ENCODE measurements at regions of chrX and their contacts with region 1.

Region 1: GRCh38 chrX:119757979-119758730 is at the start of gene SOWAHD:
- DNase-seq: peak; percentile 63
- ATAC-seq: peak; percentile 65
- H3K4me3 Mint-ChIP-seq: peak within 1 kb of the TSS; percentile 80
- H3K27ac Mint-ChIP-seq: peak within 1 kb of the TSS; percentile 95
- H3K4me1 Mint-ChIP-seq: peaks cover 36% of the 10 kb centered on the region
- H3K27me3 Mint-ChIP-seq: peaks cover 13% of the 10 kb centered on the region
- CTCF ChIP-seq: no peak
- total RNA-seq, gene SOWAHD: 3.6 to 5.0 TPM (median 4.3 TPM) in 3 replicates

Region 2: GRCh38 chrX:119512146-119512800 is 245.9 kb before region 1 on chrX:
- CTCF ChIA-PET with region 1: interaction called, 18 read pairs
- POLR2A ChIA-PET with region 1: no interaction called
- DNase-seq: peak; percentile 61
- ATAC-seq: peak; percentile 98
- H3K4me3 Mint-ChIP-seq: no peak overlapping the region
- H3K27ac Mint-ChIP-seq: no peak overlapping the region
- H3K4me1 Mint-ChIP-seq: no peaks in the 10 kb centered on the region
- H3K27me3 Mint-ChIP-seq: no peaks in the 10 kb centered on the region
- CTCF ChIP-seq: no peak

Region 3: GRCh38 chrX:119606280-119607015 is 151.7 kb before region 1 on chrX and contains the start of gene NKRF:
- CTCF ChIA-PET with region 1: interaction called, 11 read pairs
- POLR2A ChIA-PET with region 1: interaction called, 5 read pairs
- DNase-seq: peak; percentile 85
- ATAC-seq: peak; percentile 77
- H3K4me3 Mint-ChIP-seq: peak within 1 kb of the TSS; percentile 81
- H3K27ac Mint-ChIP-seq: peak within 1 kb of the TSS; percentile 86
- H3K4me1 Mint-ChIP-seq: peaks cover 20% of the 10 kb centered on the region
- H3K27me3 Mint-ChIP-seq: peaks cover 35% of the 10 kb centered on the region
- CTCF ChIP-seq: no peak
- total RNA-seq, gene NKRF: 13.0 to 15.0 TPM (median 13.6 TPM) in 3 replicates

Region 4: GRCh38 chrX:119647552-119648420 is 110.4 kb before region 1 on chrX:
- CTCF ChIA-PET with region 1: no interaction called
- POLR2A ChIA-PET with region 1: no interaction called
- DNase-seq: no peak
- ATAC-seq: no peak
- H3K4me3 Mint-ChIP-seq: no peak overlapping the region
- H3K27ac Mint-ChIP-seq: no peak overlapping the region
- H3K4me1 Mint-ChIP-seq: no peaks in the 10 kb centered on the region
- H3K27me3 Mint-ChIP-seq: no peaks in the 10 kb centered on the region
- CTCF ChIP-seq: no peak

Region 5: DNA sequence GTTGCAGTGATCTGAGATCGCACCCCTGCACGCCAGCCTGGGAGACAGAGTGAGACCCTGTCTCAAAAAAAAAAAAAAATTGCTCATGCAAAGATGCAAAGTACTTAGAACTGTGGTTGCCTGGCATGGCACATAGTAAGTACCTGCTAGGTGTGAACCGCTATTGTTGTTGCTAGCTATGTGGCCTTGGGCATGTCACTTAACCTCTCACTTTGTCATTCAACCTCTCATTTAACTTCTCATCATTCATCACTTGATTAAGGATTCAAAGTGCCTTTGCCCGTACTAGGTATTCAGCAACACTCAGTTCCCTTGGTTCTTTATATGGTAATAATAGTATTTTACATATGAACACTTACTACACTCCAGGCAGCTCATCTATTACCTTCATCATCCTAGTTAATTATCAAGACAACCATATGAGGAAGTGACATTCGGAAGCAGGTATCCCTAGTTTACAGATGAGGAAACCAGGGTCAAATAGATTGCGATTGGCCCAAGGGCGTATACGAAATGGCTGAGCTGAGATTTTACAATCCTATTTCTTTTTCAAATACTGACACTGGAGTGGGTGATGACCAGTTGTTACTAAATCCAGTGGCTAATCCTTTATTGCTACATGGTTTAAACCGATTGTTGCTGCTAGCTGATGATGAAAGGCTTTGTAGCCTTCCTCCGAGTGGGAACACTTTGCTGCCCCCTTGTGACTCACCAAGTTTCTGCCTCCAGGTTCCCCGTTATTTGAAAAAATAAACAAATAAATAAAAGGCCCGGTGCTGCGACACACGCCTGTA is 28.6 kb before region 1 on chrX:
- CTCF ChIA-PET with region 1: interaction called, 30 read pairs
- POLR2A ChIA-PET with region 1: interaction called, 4 read pairs
- DNase-seq: peak; percentile 59
- ATAC-seq: peak; percentile 67
- H3K4me3 Mint-ChIP-seq: no peak overlapping the region; the same call in 1 of the 2 replicates
- H3K27ac Mint-ChIP-seq: no peak overlapping the region
- H3K4me1 Mint-ChIP-seq: peaks cover 19% of the 10 kb centered on the region
- H3K27me3 Mint-ChIP-seq: no peaks in the 10 kb centered on the region; the same call in 1 of the 2 replicates
- CTCF ChIP-seq: peak; percentile 22; the same call in 1 of the 2 replicates

Region 6: DNA sequence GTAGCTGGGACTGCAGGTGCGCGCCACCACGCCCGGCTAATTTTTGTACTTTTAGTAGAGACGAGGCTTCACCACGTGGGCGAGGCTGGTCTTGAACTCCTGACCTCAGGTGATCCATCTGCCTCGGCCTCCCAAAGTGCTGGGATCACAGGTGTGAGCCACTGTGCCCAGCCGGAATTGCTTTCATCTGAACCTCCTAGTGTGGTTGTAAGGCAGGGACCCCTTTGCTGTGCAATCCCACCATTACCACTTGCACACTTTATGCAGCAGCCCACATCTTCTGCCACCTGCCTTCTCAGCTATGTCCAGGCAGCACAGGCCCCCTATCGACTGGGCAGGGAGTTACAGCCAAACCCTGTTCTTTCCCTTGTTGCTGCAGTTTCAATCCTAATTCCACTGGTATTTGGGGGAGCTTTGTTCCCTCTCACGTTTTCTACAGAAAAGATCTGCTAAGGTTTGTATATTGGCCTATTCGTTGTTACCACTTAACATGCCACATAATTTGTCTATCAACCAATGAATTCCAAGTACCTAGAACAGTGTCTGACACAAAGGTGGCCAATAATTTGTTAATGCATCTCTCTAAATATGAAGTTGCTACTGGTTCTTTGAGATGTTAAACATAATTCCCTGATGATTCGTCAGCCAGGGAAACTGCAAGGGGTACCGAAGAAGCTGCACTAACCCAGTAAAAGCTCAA is 26.7 kb after region 1 on chrX:
- CTCF ChIA-PET with region 1: interaction called, 13 read pairs
- POLR2A ChIA-PET with region 1: no interaction called
- DNase-seq: peak; percentile 41
- ATAC-seq: peak; percentile 49
- H3K4me3 Mint-ChIP-seq: no peak overlapping the region
- H3K27ac Mint-ChIP-seq: peak overlapping the region; percentile 69
- H3K4me1 Mint-ChIP-seq: peaks cover 26% of the 10 kb centered on the region
- H3K27me3 Mint-ChIP-seq: no peaks in the 10 kb centered on the region
- CTCF ChIP-seq: peak; percentile 39

Measured in WTC11 (cell line).